Cardiac septum (tissue), 1 donor: ENCODE measurements at regions of chr4 and their contacts with region 1.

Region 1: GRCh38 chr4:175542786-175543185 is 269.3 kb downstream of the GPM6A start:
- DNase-seq: no peak

Region 2: DNA sequence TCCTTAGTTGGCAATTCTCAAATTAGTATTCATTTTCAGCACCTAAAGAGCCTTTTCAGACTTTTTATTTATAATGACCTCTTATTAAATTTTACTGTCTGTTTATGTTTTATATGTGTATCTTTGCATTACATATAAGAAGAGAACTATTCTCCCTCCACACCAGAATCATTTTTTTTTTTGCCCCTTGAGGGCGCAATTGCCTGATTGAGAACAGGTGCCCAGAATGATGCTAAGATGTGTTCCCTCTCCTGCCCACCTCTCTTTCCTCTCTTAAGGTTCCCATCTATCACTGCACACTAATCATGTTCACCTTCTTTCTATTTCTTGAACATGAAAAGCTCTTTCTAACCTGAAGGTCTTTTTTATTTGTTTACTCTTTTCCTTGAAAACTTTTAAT is 668.9 kb before region 1 on chr4:
- intact Hi-C with region 1: loop called (anchors 10 kb)
- DNase-seq: no peak